Transverse colon (tissue), 4 donors: ENCODE measurements at regions of chr7 and their contacts with region 1.

Region 1: DNA sequence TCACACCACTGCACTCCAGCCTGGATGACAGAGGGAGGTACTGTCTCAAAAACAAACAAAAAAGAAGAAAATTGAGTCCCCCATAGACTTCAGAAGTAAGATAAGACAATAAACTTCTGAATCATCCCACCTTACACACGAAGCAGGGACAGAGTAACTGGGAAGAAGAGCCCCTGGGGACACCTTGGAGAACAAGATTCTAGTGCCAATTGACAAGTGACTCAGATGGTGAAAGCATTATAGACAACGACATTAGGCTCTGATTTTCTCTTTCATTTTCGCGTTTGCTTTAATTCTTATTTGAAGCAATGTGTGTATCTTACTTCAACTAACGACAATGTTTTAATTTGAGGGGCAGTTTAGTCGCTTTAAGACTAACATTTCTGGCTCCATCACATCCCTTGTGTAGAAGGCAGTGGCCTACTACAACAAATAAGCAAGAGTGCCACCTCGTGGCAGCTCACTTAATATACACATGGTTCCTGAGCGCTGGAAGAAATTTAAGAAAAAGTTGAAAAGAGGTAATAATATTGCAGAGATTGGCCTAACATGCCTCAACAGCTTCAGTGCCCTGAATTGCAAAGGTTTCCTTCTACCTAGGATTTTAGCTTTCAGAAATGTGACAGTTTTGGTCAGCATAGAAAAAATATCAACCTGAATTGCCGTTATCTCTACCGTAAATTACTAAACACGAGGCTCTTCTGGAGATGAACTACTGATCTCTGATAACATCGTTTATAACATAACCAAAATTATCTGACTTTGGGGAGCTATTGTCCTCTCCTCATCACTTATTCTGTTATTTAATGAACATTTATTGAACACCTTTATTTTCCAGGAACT is 36.7 kb downstream of the ASNS start:
- DNase-seq: peak; percentile 70
- H3K4me3 ChIP-seq: no peak overlapping the region
- H3K27ac ChIP-seq: no peak overlapping the region
- H3K4me1 ChIP-seq: no peaks in the 10 kb centered on the region
- H3K27me3 ChIP-seq: peaks cover 20% of the 10 kb centered on the region
- CTCF ChIP-seq: peak; percentile 55 to 66 (median 57)
- EP300 ChIP-seq: no peak
- POLR2A ChIP-seq: no peak

Region 2: DNA sequence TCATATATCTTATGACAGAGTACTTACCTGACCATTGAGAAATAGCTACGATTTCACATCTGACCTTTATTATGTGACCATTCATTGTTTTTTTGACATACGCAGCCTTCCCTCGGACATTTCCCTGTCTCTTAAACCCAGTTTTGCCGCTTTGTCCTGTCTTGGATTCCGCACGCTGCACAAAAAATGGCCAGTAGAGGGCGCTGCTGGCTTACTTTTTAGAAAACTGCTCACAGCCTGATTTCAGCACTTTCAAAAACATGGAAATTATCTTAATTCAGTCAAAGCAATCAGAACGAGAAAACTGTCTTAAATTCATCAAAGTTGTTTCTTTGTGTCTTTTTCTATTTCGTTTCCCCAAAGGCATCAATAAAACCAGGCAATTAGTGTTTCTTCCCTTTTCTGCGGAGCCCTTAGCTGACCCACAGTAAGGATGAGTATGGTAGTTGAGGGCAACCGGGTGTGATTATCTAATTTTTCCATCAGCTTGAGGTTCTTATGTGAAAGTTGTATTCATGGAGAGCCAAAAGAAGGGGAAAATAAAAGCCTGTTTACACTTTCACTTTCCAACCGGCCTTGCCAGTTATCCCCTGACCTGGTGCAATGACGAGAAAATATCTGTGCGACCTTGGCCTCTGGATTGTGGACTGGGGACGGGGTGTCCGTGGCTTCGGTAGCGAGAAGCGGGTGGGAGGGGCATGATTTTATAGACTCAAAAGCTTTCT is 1918.8 kb before region 1 on chr7:
- in situ Hi-C with region 1: loop called in 2 of 4 experiments (anchors 25 kb)
- intact Hi-C with region 1: no loop called
- DNase-seq: peak; percentile 79
- H3K4me3 ChIP-seq: peak overlapping the region in 1 of 4 donors; percentile 10
- H3K27ac ChIP-seq: no peak overlapping the region
- H3K4me1 ChIP-seq: peaks cover 0 to 8% (median 0%) of the 10 kb centered on the region in 4 donors
- H3K27me3 ChIP-seq: peaks cover 14% of the 10 kb centered on the region
- CTCF ChIP-seq: peak; percentile 77 to 93 (median 91)
- EP300 ChIP-seq: no peak
- POLR2A ChIP-seq: no peak

Region 3: GRCh38 chr7:97104719-97105238 is 730.7 kb before region 1 on chr7:
- in situ Hi-C with region 1: loop called (anchors 10 to 25 kb)
- intact Hi-C with region 1: no loop called
- DNase-seq: peak; percentile 86
- H3K4me3 ChIP-seq: no peak overlapping the region
- H3K27ac ChIP-seq: no peak overlapping the region
- H3K4me1 ChIP-seq: peaks cover 0 to 5% (median 0%) of the 10 kb centered on the region in 4 donors
- H3K27me3 ChIP-seq: no peaks in the 10 kb centered on the region
- CTCF ChIP-seq: peak; percentile 65 to 77 (median 75)
- EP300 ChIP-seq: no peak
- POLR2A ChIP-seq: no peak

Region 4: GRCh38 chr7:97117372-97118188 is 717.9 kb before region 1 on chr7 and contains the start of gene SDHAF3:
- in situ Hi-C with region 1: loop called in 1 of 4 experiments (anchors 25 kb)
- intact Hi-C with region 1: no loop called
- DNase-seq: peak; percentile 98
- H3K4me3 ChIP-seq: peak within 1 kb of the TSS; percentile 56 to 92 (median 67)
- H3K27ac ChIP-seq: peak within 1 kb of the TSS; percentile 84 to 87 (median 84)
- H3K4me1 ChIP-seq: peaks cover 6 to 17% (median 15%) of the 10 kb centered on the region in 4 donors
- H3K27me3 ChIP-seq: no peaks in the 10 kb centered on the region
- CTCF ChIP-seq: peak in 1 of 5 experiments; percentile 14
- EP300 ChIP-seq: no peak
- POLR2A ChIP-seq: peak; percentile 75
- total RNA-seq, gene SDHAF3: 0.60 to 7.5 (median 5.3) TPM in 3 of 4 donors, not detected in the other

Region 5: GRCh38 chr7:97513326-97513725 is 322.2 kb before region 1 on chr7:
- in situ Hi-C with region 1: loop called in 2 of 4 experiments (anchors 25 kb)
- intact Hi-C with region 1: no loop called
- DNase-seq: no peak
- H3K4me3 ChIP-seq: no peak overlapping the region
- H3K27ac ChIP-seq: no peak overlapping the region
- H3K4me1 ChIP-seq: no peaks in the 10 kb centered on the region
- H3K27me3 ChIP-seq: no peaks in the 10 kb centered on the region
- CTCF ChIP-seq: no peak
- EP300 ChIP-seq: no peak
- POLR2A ChIP-seq: no peak